AG04450 (cell line): ENCODE measurements at regions of chr6 and their contacts with region 1.

Region 1: DNA sequence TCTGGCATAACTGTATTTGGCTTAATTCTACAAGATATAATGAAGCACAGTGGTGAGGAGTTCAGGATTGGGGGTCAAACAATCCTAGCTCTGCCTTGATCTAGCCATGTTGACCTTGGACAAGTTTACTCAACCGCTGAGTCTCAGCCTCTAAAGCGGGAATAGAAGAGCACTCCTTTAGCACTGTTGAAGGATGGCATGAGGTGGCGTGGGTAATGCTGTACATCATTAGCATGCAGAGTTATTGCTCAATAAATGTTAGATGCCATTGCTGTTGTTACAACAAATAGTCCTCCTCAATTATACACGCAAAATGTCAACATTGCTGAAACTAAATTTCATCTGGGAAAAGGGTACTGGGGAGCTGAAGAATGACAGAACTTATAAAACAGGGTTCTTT is 78.6 kb downstream of the KIF13A start:
- DNase-seq: no peak
- H3K4me3 ChIP-seq: no peak overlapping the region
- H3K27ac ChIP-seq: no peak overlapping the region
- H3K27me3 ChIP-seq: no peaks in the 10 kb centered on the region
- CTCF ChIP-seq: no peak

Region 2: DNA sequence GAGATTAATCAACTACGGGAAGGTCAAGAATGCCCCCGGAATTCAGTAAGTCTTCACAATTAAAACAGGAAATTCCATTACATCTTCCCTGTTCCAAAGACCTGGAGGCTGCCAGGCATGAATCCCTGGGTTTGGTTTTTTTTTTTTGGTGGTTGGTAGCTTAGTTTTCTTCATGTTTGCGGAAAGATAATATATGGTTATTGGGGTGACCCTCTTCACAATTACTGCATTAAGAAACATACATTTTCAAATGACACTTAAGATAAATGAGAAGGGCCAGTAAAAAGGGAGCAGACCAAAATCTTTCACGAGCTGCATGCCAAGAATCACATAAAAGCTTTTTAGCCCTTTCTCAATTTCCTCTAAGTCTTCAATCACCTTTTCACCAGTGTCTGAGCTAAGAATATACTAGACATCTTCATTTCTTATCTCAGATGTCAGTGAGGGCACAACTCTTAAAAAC is 14.6 kb after region 1 on chr6:
- CTCF ChIA-PET with region 1: no interaction called
- POLR2A ChIA-PET with region 1: no interaction called
- DNase-seq: no peak
- H3K4me3 ChIP-seq: no peak overlapping the region
- H3K27ac ChIP-seq: no peak overlapping the region
- H3K27me3 ChIP-seq: no peaks in the 10 kb centered on the region
- CTCF ChIP-seq: no peak

Region 3: GRCh38 chr6:18004256-18004985 is 95.6 kb after region 1 on chr6:
- CTCF ChIA-PET with region 1: interaction called, 11 read pairs
- POLR2A ChIA-PET with region 1: no interaction called
- DNase-seq: no peak
- H3K4me3 ChIP-seq: no peak overlapping the region
- H3K27ac ChIP-seq: no peak overlapping the region
- H3K27me3 ChIP-seq: no peaks in the 10 kb centered on the region
- CTCF ChIP-seq: no peak